Dendritic cell treated with granulocyte-macrophage colony-stimulating factor and Interleukin-4, amounts not matched to agents 40 ng/mL and 50 ng/mL, for 4 days (primary cell): ENCODE measurements at regions of chr6 and their contacts with region 1.

Region 1: DNA sequence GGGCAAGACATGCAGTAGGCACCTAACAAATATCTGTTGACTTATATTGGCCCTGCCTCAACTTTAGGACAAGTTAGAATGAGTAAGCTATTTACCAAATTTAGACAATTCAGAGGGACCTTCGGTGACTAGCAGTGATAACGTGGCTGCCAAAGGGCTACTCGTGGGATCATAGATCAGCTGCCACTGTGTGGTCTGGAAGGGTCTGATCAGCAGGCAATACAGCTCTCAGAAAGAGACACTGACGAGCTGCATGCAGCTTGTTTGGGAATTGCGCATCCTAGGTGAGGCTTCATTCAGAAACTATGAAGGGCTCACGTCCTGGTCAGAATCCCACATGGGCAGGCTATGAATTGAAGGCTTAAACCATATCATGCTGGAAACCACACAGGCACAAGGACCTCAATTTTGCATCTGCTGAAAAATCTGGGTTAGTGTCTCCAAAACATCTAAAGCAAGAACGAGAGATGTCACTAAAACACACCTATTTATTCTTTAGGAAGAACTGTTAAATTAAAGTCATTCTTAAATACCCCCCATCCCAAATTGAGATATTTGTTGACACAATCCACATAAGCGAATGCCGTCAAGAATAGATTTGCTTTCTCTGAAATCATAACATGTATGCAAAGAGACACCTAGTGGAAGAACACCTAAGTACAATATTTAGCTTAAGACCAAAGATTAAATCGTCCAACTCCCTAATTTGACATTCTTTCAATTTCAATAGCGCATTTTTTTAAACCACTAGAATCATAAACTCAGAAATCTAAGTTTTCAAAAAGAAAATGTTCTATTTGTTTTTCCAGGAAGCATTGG is 79.6 kb downstream of the IPCEF1 start:
- H3K4me3 Mint-ChIP-seq: no peak overlapping the region
- H3K27ac Mint-ChIP-seq: peak overlapping the region; percentile 79
- H3K4me1 Mint-ChIP-seq: peaks cover 45% of the 10 kb centered on the region
- H3K27me3 Mint-ChIP-seq: no peaks in the 10 kb centered on the region

Region 2: DNA sequence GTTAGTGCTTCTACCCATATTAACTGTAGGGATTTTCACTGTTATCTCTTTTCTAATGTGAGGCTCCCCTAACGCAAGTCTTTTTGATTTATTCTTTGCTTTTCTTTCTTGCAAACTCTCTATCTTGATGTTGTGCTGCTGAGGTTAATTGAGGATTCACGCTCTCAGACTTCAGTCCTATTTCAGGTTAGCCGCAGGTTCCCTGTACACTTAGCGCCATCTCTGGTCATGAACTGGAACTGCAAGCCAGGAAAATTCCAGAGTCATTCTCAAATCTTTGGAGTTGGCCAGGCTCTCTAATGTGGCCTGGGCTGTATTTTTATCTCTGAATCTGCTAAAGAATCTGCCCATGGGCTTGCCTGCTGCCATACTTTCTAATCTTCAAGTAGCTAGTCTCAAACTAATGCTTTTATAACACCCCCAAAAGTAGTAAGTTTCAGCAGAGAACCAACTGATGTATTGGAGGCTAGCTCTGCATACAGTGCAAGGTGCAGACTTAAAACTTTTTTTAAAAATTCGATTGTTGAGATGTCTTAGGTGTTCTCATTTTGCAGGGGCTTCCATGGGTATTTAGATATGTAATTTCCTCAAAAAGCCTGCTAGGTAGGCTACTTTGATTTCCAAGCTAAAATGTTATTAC is 329.1 kb before region 1 on chr6:
- intact Hi-C with region 1: no loop called
- H3K4me3 Mint-ChIP-seq: no peak overlapping the region
- H3K27ac Mint-ChIP-seq: no peak overlapping the region
- H3K4me1 Mint-ChIP-seq: peaks cover 7% of the 10 kb centered on the region
- H3K27me3 Mint-ChIP-seq: peaks cover 1% of the 10 kb centered on the region

Region 3: GRCh38 chr6:154218301-154218700 is 58.7 kb before region 1 on chr6:
- intact Hi-C with region 1: loop called (anchors 5 kb)
- H3K4me3 Mint-ChIP-seq: peak overlapping the region; percentile 14
- H3K27ac Mint-ChIP-seq: peak overlapping the region; percentile 92
- H3K4me1 Mint-ChIP-seq: peaks cover 52% of the 10 kb centered on the region
- H3K27me3 Mint-ChIP-seq: no peaks in the 10 kb centered on the region

Region 4: DNA sequence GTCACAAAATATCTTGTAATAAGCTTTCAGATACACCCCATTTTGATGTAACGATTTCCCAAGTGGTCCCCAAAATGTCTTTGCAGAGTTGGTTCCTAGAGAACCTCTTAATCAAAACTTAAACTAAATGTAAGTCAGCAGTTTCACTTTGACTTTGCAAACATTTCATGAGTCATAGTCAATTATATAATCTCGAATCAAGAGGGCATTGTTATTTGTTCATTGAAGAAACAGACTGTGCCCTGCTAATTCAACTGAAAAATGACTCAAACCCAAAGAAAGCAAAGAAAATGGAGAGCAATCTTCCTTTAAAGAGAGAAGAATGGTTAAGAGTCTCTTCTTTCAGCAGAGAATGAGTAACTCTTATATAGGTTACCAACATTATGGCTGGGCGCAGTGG is 21.3 kb after region 1 on chr6:
- intact Hi-C with region 1: no loop called
- H3K4me3 Mint-ChIP-seq: no peak overlapping the region
- H3K27ac Mint-ChIP-seq: peak overlapping the region; percentile 39
- H3K4me1 Mint-ChIP-seq: peaks cover 59% of the 10 kb centered on the region
- H3K27me3 Mint-ChIP-seq: no peaks in the 10 kb centered on the region

Region 5: DNA sequence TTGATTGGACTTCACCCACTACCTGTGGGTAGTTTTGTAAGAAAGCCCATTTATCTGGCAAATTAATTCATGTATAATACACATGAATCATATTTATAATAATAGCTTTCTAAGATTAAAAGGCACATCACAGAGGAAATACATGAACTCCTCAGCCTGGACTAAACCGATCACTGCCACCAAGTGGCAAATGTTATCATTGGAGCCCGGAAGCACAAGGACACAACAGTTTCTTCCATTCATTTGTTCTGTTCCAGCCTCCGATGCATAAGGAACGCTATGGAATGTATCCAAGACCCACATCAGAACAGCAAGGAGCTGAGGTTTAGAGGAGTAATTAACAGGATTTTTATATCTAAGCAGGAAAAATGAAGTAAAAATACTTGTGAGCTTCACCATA is 93.5 kb after region 1 on chr6:
- intact Hi-C with region 1: loop called (anchors 5 kb)
- H3K4me3 Mint-ChIP-seq: peak overlapping the region; percentile 46
- H3K27ac Mint-ChIP-seq: peak overlapping the region; percentile 76
- H3K4me1 Mint-ChIP-seq: peaks cover 53% of the 10 kb centered on the region
- H3K27me3 Mint-ChIP-seq: no peaks in the 10 kb centered on the region